ENCODE measurements at regions of chr17 and their contacts with region 1.

Region 1: GRCh38 chr17:38868817-38869525 is 887 bp upstream of the LASP1 start:
- DNase-seq: peak; percentile 90
- H3K4me3 Mint-ChIP-seq: peak overlapping the region; percentile 98
- H3K27ac Mint-ChIP-seq: peak overlapping the region; percentile 98
- H3K4me1 Mint-ChIP-seq: peaks cover 45% of the 10 kb centered on the region
- H3K27me3 Mint-ChIP-seq: no peaks in the 10 kb centered on the region

Region 2: DNA sequence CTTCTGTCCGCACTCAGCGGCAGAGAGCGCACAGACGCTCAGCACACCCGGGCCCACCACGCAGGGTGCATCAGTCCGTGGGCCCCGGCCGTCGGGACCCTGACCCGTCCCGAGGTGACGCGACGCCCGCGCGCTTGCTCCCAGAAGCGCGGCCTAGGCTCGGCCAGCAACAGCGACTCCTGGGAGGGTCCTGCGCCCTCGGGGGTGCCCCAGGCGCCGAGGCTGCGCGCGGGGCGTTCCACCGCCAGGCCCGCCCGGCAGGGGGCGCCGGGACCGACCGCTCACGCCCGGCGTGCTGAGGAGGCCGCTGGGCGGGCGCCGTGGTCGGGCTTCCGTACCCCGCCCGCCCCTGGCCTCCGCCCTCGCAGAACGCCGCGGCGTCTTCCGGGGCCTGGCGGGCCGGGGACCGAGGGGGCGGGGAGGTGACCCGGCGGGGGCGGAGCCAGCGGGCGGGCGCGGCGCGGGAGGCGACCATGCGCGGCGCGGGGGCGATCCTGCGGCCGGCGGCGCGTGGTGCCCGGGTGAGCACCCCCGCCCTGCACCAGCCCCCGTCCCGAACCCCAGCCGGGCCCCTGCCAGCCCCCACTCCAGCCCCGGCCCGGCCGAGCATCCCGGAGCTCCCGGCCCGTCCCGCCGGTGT is 139.0 kb before region 1 on chr17 and contains the start of gene CISD3:
- CTCF ChIA-PET with region 1: interaction called, 7 read pairs
- POLR2A ChIA-PET with region 1: interaction called, 13 read pairs
- DNase-seq: peak; percentile 90
- H3K4me3 Mint-ChIP-seq: peak within 1 kb of the TSS; percentile 99
- H3K27ac Mint-ChIP-seq: peak within 1 kb of the TSS; percentile 100
- H3K4me1 Mint-ChIP-seq: peaks cover 78% of the 10 kb centered on the region
- H3K27me3 Mint-ChIP-seq: no peaks in the 10 kb centered on the region
- total RNA-seq, gene CISD3: 42.8 to 48.6 TPM

Region 3: DNA sequence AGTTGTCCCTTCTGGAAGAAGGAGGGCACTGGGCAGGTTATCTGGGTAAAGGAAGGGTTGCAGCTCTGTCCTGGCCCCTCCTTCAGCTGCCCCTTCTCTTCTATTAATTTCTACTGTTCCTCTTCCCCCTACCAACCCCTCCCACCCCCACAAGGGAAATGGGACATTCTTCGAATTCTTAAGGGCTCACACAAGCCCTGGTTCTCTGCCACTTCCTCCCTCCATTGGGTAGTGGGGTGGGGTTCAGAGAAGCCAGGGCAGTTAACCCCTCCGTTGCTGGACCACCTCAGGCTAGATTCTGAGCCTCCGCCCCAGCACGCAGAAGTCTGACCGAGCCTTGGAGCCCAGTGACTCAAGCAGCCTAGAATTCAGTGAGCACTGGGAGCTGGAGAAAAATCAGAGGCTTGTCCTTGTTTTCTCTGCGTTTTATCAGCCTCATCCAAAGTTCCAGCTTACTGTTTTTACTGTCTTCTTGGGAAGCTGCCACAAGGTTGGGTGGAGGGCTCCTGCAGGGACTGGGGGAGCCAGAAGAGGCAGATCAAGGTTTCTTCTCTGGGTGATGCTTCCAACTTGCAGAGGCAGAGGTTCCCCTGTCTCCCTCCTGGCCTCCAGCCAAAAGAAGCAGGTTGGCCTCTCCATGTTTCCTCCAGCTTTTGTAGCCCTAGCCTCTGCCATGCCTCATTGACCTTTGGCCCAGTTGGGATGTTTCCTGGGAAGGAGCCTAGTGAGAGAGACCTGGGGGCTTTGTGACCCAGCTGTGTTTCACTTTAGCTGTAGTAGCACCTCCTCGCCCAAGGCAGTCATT is 11.1 kb after region 1 on chr17:
- CTCF ChIA-PET with region 1: interaction called, 5 read pairs
- POLR2A ChIA-PET with region 1: interaction called, 39 read pairs
- DNase-seq: no peak
- H3K4me3 Mint-ChIP-seq: no peak overlapping the region
- H3K27ac Mint-ChIP-seq: peak overlapping the region; percentile 28
- H3K4me1 Mint-ChIP-seq: peaks cover 85% of the 10 kb centered on the region
- H3K27me3 Mint-ChIP-seq: no peaks in the 10 kb centered on the region

Region 4: DNA sequence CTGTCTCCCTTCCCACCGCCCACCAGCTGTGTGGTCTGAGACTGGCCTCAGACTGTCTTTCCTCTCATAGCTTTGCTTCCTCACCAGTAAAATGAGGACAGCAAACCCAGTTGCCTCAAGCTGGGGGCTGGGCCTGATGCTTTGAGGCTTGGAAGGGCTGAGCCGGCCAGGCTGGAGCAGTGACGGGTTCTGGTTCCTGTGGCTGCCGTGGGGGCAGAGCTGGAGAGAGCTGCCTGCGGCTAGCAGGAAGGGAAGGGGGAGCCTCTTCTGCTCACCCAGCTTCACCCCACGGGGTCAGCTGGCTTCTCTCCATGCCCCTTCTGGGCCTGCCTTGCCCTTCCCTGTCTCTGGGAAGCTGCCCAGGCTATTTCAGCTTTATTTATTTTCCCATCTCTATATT is 24.6 kb after region 1 on chr17:
- CTCF ChIA-PET with region 1: interaction called, 29 read pairs
- POLR2A ChIA-PET with region 1: interaction called, 144 read pairs
- DNase-seq: peak; percentile 63
- H3K4me3 Mint-ChIP-seq: no peak overlapping the region
- H3K27ac Mint-ChIP-seq: peak overlapping the region; percentile 71
- H3K4me1 Mint-ChIP-seq: peaks cover 86% of the 10 kb centered on the region
- H3K27me3 Mint-ChIP-seq: no peaks in the 10 kb centered on the region

Region 5: GRCh38 chr17:38922538-38923297 is 53.7 kb after region 1 on chr17:
- CTCF ChIA-PET with region 1: interaction called, 5 read pairs
- POLR2A ChIA-PET with region 1: interaction called, 20 read pairs
- DNase-seq: peak; percentile 15
- H3K4me3 Mint-ChIP-seq: no peak overlapping the region
- H3K27ac Mint-ChIP-seq: no peak overlapping the region
- H3K4me1 Mint-ChIP-seq: peaks cover 29% of the 10 kb centered on the region
- H3K27me3 Mint-ChIP-seq: no peaks in the 10 kb centered on the region